ENCODE measurements at regions of chr4 and their contacts with region 1.

Region 1: DNA sequence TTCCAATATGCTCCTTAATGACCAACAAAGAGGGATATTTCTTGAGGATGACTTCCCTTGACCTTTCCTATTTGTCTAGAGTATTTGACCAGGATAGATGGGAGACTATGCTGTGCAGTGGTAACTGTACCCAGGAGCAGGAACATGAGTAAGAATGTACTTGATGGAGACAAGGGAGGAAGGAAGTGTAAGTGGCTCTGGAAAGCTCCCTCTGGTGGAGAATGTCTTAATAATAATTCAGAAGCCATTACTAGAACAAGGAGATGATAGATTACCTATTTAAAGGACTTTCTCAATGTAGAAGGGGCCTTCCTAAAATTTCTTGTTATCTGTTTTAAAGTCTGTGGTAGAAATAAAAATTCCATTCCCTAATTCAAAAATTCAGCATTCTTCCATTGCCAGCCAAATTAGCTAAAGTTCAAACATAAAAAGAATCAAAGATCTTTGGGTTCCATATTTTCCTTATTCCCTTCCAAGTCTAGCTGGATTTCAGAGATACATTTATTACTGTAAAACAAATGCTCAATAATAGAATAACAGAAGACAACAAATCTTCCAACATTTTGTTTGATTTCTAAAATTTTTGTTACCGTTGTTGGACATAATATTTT is 83.8 kb downstream of the GRID2 start:
- DNase-seq: no peak
- ATAC-seq: no peak
- H3K4me3 ChIP-seq: no peak overlapping the region
- H3K27ac ChIP-seq: no peak overlapping the region
- H3K4me1 ChIP-seq: no peaks in the 10 kb centered on the region
- H3K27me3 ChIP-seq: no peaks in the 10 kb centered on the region

Region 2: GRCh38 chr4:91113130-91113706 is 1274.3 kb before region 1 on chr4:
- intact Hi-C with region 1: loop called in 1 of 2 experiments (anchors 10 kb)
- DNase-seq: no peak
- ATAC-seq: no peak
- H3K4me3 ChIP-seq: no peak overlapping the region
- H3K27ac ChIP-seq: no peak overlapping the region
- H3K4me1 ChIP-seq: no peaks in the 10 kb centered on the region
- H3K27me3 ChIP-seq: no peaks in the 10 kb centered on the region

Region 3: GRCh38 chr4:92172203-92172602 is 215.4 kb before region 1 on chr4:
- intact Hi-C with region 1: loop called in 1 of 2 experiments (anchors 10 kb)
- DNase-seq: no peak
- ATAC-seq: no peak
- H3K4me3 ChIP-seq: no peak overlapping the region
- H3K27ac ChIP-seq: no peak overlapping the region
- H3K4me1 ChIP-seq: no peaks in the 10 kb centered on the region
- H3K27me3 ChIP-seq: no peaks in the 10 kb centered on the region